Motor neuron (in vitro differentiated cells): ENCODE measurements at regions of chr5 and their contacts with region 1.

Region 1: DNA sequence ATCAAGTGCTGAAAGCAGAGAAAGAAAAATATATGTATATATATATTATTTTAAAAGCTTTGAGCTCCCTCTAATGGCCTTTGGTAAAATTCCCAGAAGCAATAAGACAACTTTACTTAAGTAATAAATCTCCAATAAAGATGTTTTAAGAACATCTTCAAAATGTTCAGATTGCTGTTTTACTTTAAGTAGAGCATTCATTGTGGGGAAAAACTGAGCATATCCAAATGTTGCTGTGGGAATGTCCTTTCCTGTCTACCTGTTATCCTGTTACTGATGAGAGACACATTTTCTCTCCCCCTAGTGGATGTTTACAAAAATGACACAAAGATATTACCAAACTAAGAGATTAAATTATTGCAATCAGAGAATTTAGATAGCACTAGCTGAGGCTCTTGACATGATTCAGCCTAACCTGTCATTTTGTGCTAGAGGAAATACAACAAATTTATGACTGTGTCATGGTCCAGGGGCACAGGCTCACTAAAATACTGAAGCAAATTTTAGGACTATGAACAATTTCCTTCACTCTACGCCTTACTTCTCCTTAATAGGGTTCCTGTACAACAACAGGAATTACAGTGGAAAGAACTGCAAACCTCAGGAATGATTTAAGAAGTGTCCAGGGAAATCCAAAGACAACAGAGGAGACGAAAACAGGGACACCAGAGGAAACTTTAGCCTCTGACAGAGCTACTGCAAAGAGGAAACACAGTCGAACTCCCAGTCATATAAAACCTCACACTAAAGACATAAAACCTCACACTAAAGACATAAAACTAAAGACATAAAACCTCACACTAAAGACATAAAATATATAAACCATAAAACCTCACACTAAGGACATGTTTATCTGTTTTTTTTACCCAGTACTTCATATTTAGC is 24.3 kb upstream of the PRRC1 start:
- ATAC-seq: peak in 5 of 8 experiments; percentile 28 to 77 (median 46)
- H3K4me3 ChIP-seq: no peak overlapping the region
- H3K27ac ChIP-seq: no peak overlapping the region
- H3K4me1 ChIP-seq: peaks cover 0 to 4% of the 10 kb centered on the region in 2 donors

Region 2: GRCh38 chr5:126656396-126657007 is 836.6 kb before region 1 on chr5:
- in situ Hi-C with region 1: loop called in 1 of 9 experiments (anchors 25 kb)
- ATAC-seq: no peak
- H3K4me3 ChIP-seq: no peak overlapping the region
- H3K27ac ChIP-seq: no peak overlapping the region
- H3K4me1 ChIP-seq: no peaks in the 10 kb centered on the region

Region 3: DNA sequence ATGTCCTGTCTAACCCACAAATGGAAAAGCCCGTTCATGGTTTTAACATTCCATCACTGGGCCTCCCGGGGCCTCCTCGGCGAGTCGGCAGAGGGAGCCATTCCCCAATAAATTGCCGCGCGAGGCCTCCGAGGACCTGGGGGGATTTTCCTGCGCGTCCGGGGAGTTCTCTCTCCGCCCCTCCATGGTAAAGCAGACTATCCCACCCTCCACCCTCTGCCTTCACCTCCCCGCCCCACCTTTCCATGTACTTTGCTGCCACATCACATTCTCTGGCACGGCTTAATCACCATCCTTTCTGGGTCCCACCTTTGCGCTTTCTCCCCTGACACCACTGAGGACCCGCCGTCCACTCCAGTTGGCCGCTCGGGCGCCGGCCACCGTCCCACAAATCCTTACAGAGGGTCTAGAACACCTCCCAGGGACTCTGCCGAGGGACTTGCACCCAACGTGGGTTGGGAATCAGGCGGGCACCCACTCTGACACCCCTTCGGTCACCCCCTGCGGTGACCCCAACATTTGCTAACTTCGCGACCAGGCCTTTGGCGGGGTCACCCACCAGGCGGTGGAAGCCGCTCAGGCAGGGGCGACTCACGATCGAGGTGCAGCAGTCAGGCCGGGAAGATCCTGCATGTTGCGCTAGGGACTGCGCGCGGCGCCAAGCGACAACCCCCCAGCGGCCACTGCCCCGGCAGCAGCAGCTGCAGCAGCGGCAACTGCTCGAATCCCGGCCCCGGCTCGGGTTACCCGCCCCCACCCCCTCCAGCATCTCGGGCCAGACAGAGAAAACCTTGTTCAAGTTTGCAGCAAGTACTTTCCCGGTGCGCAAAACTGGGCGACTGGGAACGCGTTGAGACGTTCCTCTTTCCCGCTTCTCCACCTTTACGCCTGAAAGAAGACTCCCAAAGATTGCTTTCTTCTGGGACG is 202.8 kb before region 1 on chr5 and contains the start of gene MEGF10:
- in situ Hi-C with region 1: loop called in 1 of 9 experiments (anchors 10 kb)
- ATAC-seq: peak; percentile 86 to 95 (median 92)
- H3K4me3 ChIP-seq: peak within 1 kb of the TSS; percentile 33 to 63 (median 40)
- H3K27ac ChIP-seq: no peak within 1 kb of the TSS
- H3K4me1 ChIP-seq: peaks cover 0 to 6% of the 10 kb centered on the region in 2 donors
- total RNA-seq, gene MEGF10: 1.9 to 317 (median 6.3) TPM